ENCODE measurements at regions of chr2 and their contacts with region 1.

Region 1: GRCh38 chr2:36355151-36355889 is at the start of gene CRIM1:
- DNase-seq: peak; percentile 70 to 92
- ATAC-seq: peak; percentile 55 to 68
- H3K4me3 ChIP-seq: peak within 1 kb of the TSS; percentile 90
- H3K27ac ChIP-seq: peak within 1 kb of the TSS; percentile 93 to 97
- H3K4me1 ChIP-seq: peaks cover 45% of the 10 kb centered on the region
- CTCF ChIP-seq: no peak
- EP300 ChIP-seq: no peak
- POLR2A ChIP-seq: peak; percentile 95
- RAD21 ChIP-seq: peak in 1 of 2 experiments; percentile 35; a peak in 2 of 5 replicates
- polyA plus RNA-seq, gene CRIM1: 208 and 275 TPM in 2 replicates

Region 2: GRCh38 chr2:36371070-36371874 is 16.0 kb after region 1 on chr2:
- CTCF ChIA-PET with region 1: interaction called, 37 read pairs
- POLR2A ChIA-PET with region 1: interaction called, 11 read pairs
- DNase-seq: peak in 1 of 2 experiments; percentile 62
- ATAC-seq: peak in 1 of 2 experiments; percentile 16; a peak in 3 of 6 replicates
- H3K4me3 ChIP-seq: peak overlapping the region; percentile 25; the same call in 2 of the 3 replicates
- H3K27ac ChIP-seq: peak overlapping the region; percentile 75 to 88
- H3K4me1 ChIP-seq: peaks cover 100% of the 10 kb centered on the region
- CTCF ChIP-seq: no peak
- EP300 ChIP-seq: no peak
- POLR2A ChIP-seq: no peak
- RAD21 ChIP-seq: 0 out of 5 replicates have a peak, but pooled peaks of 1 of the 2 experiments have one; percentile 1

Region 3: DNA sequence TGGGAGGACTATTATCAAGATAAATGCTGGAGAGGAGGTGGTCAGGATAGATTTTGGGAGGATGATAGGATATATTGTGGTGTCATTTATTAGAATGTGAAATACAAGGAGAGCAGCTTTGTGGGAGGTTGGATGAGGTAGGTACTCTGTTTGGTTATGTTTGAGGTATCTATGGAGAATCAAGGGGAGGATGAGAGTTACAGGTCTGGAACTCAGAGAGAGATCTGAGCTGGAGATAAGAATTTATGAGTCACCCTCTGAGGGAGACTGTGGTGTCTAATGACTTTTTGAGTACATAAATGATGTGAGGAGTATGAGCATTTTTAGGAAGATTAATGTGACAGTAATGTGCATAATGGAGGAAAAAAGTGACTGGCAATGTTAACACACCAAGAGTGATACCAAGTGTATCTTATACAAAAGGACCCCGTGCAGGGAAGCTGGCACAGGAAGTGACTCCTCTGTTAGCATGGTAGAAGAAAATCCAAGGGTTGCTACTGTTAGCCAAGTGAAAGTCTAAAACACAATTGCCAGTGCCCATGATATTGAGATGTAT is 48.4 kb after region 1 on chr2:
- CTCF ChIA-PET with region 1: interaction called, 18 read pairs
- POLR2A ChIA-PET with region 1: interaction called, 7 read pairs
- DNase-seq: peak; percentile 69 to 97
- ATAC-seq: peak; percentile 85 to 87
- H3K4me3 ChIP-seq: peak overlapping the region; percentile 30
- H3K27ac ChIP-seq: peak overlapping the region; percentile 88 to 92
- H3K4me1 ChIP-seq: peaks cover 98% of the 10 kb centered on the region
- CTCF ChIP-seq: no peak
- EP300 ChIP-seq: peak; percentile 97 to 98; a peak in 4 of 5 replicates
- POLR2A ChIP-seq: no peak
- RAD21 ChIP-seq: peak; percentile 20 to 57; a peak in 4 of 5 replicates

Region 4: DNA sequence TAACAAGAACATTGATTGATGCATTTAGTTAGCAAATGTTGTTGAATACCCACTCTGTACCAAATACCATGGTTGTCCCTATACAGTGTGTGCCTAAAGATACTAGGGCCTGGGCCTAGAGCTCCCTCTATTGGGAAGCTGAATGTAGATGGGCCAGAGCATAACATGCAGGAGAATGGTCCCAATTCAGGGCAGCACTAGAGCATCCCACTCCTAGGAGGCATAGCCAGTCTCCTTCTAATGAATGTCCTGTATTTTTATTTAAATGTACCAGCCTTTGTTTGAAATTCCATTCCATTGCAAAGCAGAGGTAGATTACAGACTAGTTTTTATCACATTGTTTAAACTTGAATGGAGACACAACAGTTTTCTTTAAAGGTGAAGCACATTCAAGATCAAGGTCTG is 152.1 kb after region 1 on chr2:
- CTCF ChIA-PET with region 1: interaction called, 22 read pairs
- POLR2A ChIA-PET with region 1: no interaction called
- DNase-seq: peak; percentile 60 to 72
- ATAC-seq: peak; percentile 92 to 94
- H3K4me3 ChIP-seq: no peak overlapping the region
- H3K27ac ChIP-seq: peak overlapping the region; percentile 25 to 31; a peak in 3 of 6 replicates
- H3K4me1 ChIP-seq: peaks cover 58% of the 10 kb centered on the region
- CTCF ChIP-seq: peak; percentile 87
- EP300 ChIP-seq: no peak
- POLR2A ChIP-seq: no peak
- RAD21 ChIP-seq: peak; percentile 92 to 97

Region 5: DNA sequence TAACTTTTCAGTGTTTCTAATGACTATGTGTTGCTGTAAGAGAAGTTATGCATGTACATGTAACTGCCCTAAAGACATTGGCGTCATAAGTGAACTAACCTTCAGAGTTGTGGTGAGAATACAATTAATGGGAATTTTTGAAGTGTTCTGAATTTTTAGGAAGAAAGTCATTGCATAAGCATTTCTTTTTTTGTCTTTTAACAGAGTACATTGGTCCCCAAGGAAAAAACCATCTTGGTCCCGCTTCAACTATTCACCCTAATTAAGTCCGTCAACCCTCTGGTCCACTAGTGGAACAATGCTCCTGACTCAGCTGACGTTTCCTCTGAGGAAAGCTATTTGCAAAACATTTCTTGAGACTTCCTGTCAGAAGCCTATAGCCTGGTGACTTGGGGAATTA is 300.1 kb after region 1 on chr2:
- CTCF ChIA-PET with region 1: interaction called, 13 read pairs
- POLR2A ChIA-PET with region 1: interaction called, 3 read pairs
- DNase-seq: no peak
- ATAC-seq: no peak
- H3K4me3 ChIP-seq: no peak overlapping the region
- H3K27ac ChIP-seq: no peak overlapping the region
- H3K4me1 ChIP-seq: peaks cover 19% of the 10 kb centered on the region
- CTCF ChIP-seq: no peak
- EP300 ChIP-seq: no peak
- POLR2A ChIP-seq: no peak
- RAD21 ChIP-seq: no peak

Measured in A549 (cell line).